A549 (cell line): ENCODE measurements at regions of chr14 and their contacts with region 1.

Region 1: GRCh38 chr14:35826218-35826951 is at the start of gene BRMS1L:
- DNase-seq: peak; percentile 97 to 99
- ATAC-seq: peak; percentile 96 to 97
- H3K4me3 ChIP-seq: peak within 1 kb of the TSS; percentile 68
- H3K27ac ChIP-seq: peak within 1 kb of the TSS; percentile 90 to 95
- H3K4me1 ChIP-seq: peaks cover 4% of the 10 kb centered on the region; the same call in 1 of the 3 replicates
- CTCF ChIP-seq: no peak
- EP300 ChIP-seq: no peak
- POLR2A ChIP-seq: peak; percentile 95
- RAD21 ChIP-seq: no peak
- polyA plus RNA-seq, gene BRMS1L: 11.0 and 17.0 TPM in 2 replicates

Region 2: DNA sequence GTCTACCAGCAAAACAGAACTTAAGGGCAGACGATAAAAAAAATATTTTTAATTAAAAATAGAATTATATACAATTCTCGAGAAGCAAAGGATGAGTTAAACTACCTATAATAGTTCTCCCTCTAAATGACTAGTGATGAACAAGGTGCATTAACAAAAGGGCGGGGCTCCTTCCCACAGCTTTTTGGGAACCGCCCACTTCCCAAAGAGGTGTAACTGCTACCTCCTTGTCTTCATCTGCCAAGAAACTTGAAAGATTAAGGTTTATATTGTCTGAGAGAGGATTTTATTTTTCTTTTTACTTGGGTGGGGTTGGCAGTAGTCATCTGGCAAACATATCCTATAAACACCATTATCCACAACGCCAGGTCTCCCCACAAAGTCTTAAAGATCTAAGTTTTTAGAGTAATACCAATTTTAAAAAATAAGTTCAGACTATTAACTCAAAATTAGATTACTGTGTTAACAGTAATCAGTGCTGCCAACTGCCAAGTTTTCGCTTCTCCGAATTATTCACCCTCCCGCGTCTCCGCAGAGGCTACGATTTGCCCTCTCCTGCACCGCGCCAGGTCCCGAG is 18.2 kb before region 1 on chr14:
- CTCF ChIA-PET with region 1: interaction called, 5 read pairs
- POLR2A ChIA-PET with region 1: interaction called, 20 read pairs
- DNase-seq: peak in 1 of 2 experiments; percentile 31
- ATAC-seq: peak; percentile 20 to 33; a peak in 2 of 6 replicates
- H3K4me3 ChIP-seq: peak overlapping the region; percentile 84
- H3K27ac ChIP-seq: peak overlapping the region; percentile 86 to 92
- H3K4me1 ChIP-seq: peaks cover 18% of the 10 kb centered on the region
- CTCF ChIP-seq: no peak
- EP300 ChIP-seq: no peak
- POLR2A ChIP-seq: no peak
- RAD21 ChIP-seq: no peak

Region 3: DNA sequence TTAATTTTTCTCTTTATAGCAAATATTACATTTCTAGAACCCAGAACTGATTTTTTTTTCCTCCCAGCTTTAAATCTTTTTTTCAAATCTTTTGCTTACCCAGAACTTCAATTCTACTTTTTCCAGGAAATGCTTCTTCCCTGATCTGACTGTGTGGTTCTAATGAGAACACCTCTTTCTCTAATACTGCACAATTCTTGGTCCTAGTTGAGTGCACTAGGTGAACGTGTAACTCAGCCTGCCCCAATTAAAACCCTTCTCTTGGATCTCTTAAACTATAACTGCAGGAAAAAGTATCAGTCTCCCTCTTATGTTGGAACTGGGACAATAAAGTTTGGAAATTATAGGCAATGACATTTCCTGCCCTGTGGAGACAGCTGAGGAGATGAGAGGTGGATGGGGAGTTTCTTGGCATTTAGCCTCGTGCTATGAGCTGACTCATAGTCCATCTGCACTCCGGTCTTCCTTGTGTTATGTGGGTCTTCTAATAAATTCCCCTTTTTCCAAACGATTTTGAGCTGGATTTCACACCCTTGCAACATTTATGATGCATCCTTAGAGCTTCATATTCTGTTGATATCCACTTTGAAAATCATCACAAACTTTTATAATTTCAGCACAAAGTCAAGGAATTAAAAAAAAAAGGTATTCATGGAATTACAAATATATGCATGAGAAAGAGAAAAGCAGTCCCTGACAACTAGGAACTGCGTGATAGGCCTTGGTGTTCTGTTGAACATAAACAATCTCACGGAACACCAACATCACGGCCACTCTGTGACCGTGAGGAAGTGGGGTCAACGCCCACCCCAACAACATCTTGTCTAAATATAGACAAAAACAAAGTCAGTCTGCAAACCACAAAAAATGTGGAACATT is 52.1 kb after region 1 on chr14:
- CTCF ChIA-PET with region 1: interaction called, 4 read pairs
- POLR2A ChIA-PET with region 1: interaction called, 21 read pairs
- DNase-seq: peak; percentile 41 to 74
- ATAC-seq: peak; percentile 91 to 97
- H3K4me3 ChIP-seq: no peak overlapping the region
- H3K27ac ChIP-seq: peak overlapping the region; percentile 56 to 72
- H3K4me1 ChIP-seq: peaks cover 46% of the 10 kb centered on the region
- CTCF ChIP-seq: no peak
- EP300 ChIP-seq: no peak
- POLR2A ChIP-seq: no peak
- RAD21 ChIP-seq: no peak

Region 4: DNA sequence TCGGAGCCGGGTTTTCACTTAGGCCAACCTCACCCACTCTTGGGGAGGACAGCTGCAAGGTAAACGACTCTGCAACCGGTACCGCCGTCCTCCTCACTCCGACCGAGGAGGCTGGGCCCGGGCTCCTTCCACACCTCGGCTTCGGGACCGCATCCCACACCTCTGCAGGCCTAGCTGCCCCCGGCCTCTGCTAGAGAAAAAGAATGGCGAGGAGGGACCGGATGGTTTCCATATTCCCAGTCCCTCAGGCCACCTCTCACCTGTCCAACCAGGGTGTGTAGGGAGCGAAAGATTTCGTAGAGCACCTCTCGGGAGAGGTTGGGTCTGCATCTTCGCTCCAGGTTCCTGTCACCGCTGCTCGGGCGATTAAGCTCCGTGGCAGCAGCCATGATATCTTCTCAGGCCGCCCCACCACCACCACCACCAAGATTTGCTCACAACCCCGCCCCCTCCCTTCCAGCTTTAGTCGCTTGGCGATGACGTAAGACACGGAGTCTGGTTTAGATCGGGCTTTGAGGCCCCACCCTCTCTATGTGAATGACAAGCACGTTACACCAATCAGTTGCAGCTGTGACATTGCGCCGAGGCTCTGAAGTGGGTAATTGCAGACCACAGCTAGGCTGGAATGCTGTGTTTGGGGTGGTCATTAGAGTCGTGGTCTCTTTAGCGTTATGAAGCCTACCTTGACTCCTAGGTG is 494.0 kb after region 1 on chr14 and contains the start of gene MBIP:
- CTCF ChIA-PET with region 1: no interaction called
- POLR2A ChIA-PET with region 1: interaction called, 11 read pairs
- DNase-seq: peak; percentile 95 to 98
- ATAC-seq: peak; percentile 98 to 99
- H3K4me3 ChIP-seq: peak within 1 kb of the TSS; percentile 68
- H3K27ac ChIP-seq: peak within 1 kb of the TSS; percentile 80 to 90
- H3K4me1 ChIP-seq: peaks cover 23% of the 10 kb centered on the region
- CTCF ChIP-seq: no peak
- EP300 ChIP-seq: no peak
- POLR2A ChIP-seq: peak; percentile 47
- RAD21 ChIP-seq: no peak
- polyA plus RNA-seq, gene MBIP: 24.3 and 33.1 TPM in 2 replicates